ENCODE measurements at regions of chr2 and their contacts with region 1.

Region 1: GRCh38 chr2:8681786-8682692 is at the start of gene ID2:
- DNase-seq: peak; percentile 94 to 98
- H3K4me3 ChIP-seq: peak within 1 kb of the TSS; percentile 79 to 93 (median 89)
- H3K27ac ChIP-seq: peak within 1 kb of the TSS; percentile 58; the same call in 1 of the 2 replicates
- H3K4me1 ChIP-seq: peaks cover 6 to 29% (median 13%) of the 10 kb centered on the region in 4 experiments
- H3K27me3 ChIP-seq: peaks cover 0 to 36% (median 23%) of the 10 kb centered on the region in 4 experiments; a peak in 6 of 7 replicates
- CTCF ChIP-seq: no peak
- EP300 ChIP-seq: no peak
- POLR2A ChIP-seq: peak; percentile 99 to 100
- RAD21 ChIP-seq: peak; percentile 19 to 27; a peak in 2 of 4 replicates
- total RNA-seq, gene ID2: 36.7 and 37.1 TPM in 2 replicates

Region 2: DNA sequence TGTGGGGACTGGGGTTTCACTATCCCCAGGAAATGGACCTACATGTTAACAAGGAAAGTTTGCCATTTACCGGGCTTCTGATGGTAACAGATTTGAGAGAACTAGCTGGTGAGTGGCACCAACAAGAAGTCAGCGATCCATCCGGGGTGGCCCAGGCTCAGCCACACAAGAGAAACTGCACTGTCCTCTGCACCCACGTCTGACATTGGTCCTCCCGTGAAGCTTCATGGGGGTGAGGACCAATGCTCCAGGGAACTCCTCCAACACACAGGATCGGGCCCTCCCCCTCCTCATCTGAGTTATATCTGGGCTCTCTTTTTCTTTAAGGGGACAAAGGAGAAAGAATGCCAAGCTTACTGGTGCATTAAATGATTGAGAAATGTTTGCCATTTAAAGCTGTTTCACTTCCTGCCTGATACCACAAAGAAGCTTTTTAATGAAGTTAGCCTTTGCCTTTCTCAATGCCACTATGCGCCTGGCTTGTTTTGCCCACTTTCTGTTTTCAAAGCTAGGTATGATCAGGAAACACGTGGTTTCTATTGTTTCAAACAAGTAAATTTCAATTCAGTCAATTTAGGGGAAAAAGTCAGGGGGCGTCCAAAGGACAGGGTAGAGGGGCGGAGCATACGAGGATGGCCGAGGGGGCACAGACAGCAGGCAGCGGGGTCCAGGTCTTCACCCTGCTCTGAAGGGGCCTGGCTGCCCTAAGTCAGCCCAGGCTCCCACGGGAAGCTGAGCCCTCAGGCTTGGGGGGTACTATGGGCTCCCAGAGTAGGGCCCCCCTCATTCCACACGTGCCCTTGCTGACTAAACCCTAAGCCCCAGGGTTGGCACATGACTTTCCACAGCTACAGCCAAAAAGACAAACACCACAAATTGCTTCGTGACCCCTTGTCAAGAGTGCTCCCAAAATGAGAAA is 204.2 kb before region 1 on chr2:
- CTCF ChIA-PET with region 1: no interaction called
- POLR2A ChIA-PET with region 1: no interaction called
- DNase-seq: no peak
- H3K4me3 ChIP-seq: no peak overlapping the region
- H3K27ac ChIP-seq: no peak overlapping the region
- H3K4me1 ChIP-seq: no peaks in the 10 kb centered on the region
- H3K27me3 ChIP-seq: no peaks in the 10 kb centered on the region
- CTCF ChIP-seq: no peak
- EP300 ChIP-seq: no peak
- POLR2A ChIP-seq: no peak
- RAD21 ChIP-seq: no peak

Region 3: GRCh38 chr2:8574144-8575037 is 107.6 kb before region 1 on chr2:
- CTCF ChIA-PET with region 1: no interaction called
- POLR2A ChIA-PET with region 1: interaction called, 13 read pairs
- DNase-seq: no peak
- H3K4me3 ChIP-seq: no peak overlapping the region
- H3K27ac ChIP-seq: no peak overlapping the region
- H3K4me1 ChIP-seq: peaks cover 0 to 19% (median 8%) of the 10 kb centered on the region in 4 experiments; a peak in 6 of 7 replicates
- H3K27me3 ChIP-seq: peaks cover 0 to 1% (median 0%) of the 10 kb centered on the region in 4 experiments; a peak in 1 of 7 replicates
- CTCF ChIP-seq: no peak
- EP300 ChIP-seq: no peak
- POLR2A ChIP-seq: no peak
- RAD21 ChIP-seq: no peak

Region 4: DNA sequence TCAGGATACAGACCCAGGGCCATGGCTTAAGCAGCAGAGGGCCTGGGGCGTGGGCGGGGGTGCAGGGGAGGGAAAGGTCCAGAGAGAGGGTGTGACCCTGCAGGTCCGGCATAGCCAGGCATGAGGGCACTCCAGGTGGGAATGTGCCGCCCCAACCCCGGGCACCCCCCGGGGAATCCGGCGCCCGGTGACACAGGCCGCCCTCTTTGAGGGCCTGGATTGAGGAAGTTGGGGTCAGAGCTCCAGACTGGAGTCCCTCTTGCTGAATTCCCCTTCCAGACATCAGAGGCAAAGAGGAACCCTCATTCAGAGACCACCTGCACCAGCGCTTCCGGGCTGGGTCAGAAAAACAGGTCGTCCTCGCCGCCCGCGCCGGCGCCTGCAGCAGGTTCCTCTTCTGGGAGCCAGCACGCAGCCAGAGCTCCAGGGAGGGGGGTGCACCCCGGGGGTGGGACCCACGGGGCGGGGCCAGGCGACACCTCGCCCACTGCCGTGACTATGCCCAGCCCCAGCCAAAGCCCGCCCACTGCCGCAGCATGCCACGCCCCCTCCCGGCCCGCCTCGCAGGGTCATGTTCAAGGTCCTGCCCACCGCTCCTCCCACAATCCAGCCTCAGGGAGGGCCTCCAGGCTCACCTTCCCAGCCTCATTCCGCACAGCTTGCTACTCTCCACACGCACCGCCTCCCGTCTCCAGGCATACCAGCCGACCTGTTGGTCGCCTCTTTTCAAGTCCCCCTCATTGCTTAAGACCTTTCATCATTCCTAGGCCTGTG is 98.5 kb before region 1 on chr2:
- CTCF ChIA-PET with region 1: interaction called, 6 read pairs
- POLR2A ChIA-PET with region 1: interaction called, 19 read pairs
- DNase-seq: peak; percentile 94 to 100
- H3K4me3 ChIP-seq: peak overlapping the region in 2 of 4 experiments; percentile 7 to 38; a peak in 2 of 8 replicates
- H3K27ac ChIP-seq: no peak overlapping the region
- H3K4me1 ChIP-seq: peaks cover 2 to 22% (median 12%) of the 10 kb centered on the region in 4 experiments
- H3K27me3 ChIP-seq: peaks cover 0 to 2% (median under 1%) of the 10 kb centered on the region in 4 experiments; a peak in 2 of 7 replicates
- CTCF ChIP-seq: no peak
- EP300 ChIP-seq: no peak
- POLR2A ChIP-seq: no peak
- RAD21 ChIP-seq: no peak

Region 5: GRCh38 chr2:8638327-8638726 is 43.7 kb before region 1 on chr2:
- CTCF ChIA-PET with region 1: interaction called, 6 read pairs
- POLR2A ChIA-PET with region 1: interaction called, 23 read pairs
- DNase-seq: no peak
- H3K4me3 ChIP-seq: peak overlapping the region in 1 of 4 experiments; percentile 25; a peak in 2 of 8 replicates
- H3K27ac ChIP-seq: no peak overlapping the region
- H3K4me1 ChIP-seq: peaks cover 13 to 45% (median 25%) of the 10 kb centered on the region in 4 experiments
- H3K27me3 ChIP-seq: peaks cover 1 to 10% (median 5%) of the 10 kb centered on the region in 4 experiments; a peak in 5 of 7 replicates
- CTCF ChIP-seq: no peak
- EP300 ChIP-seq: no peak
- POLR2A ChIP-seq: no peak
- RAD21 ChIP-seq: no peak

Region 6: DNA sequence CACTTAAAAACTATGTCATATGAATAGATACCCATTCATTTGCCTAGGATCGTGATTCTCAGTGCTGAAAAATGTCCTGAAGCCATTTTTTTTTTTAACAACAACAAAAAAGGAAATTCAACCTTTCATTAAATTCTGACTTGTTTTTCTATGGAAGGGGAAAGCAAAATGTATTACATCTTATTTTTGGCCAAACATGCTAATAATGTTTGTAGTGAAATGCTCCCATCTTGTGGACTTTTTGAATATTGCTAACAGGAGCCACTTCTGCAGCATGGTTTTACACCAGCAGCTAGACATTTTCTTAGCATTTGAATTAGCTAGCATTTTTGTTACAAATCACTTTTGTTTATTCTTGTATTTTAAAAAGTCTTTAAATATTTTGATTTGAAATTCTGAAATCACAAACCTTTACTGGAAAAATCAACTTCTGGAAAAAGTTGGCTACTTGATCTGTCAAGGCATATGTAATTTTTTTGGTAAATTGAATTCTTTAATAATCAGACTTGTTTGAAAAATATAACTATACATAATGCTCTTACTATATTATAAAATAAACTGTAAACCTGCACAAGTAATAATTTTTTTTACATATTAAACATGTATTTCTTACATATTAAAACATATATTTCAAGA is 79.6 kb after region 1 on chr2:
- CTCF ChIA-PET with region 1: no interaction called
- POLR2A ChIA-PET with region 1: no interaction called
- DNase-seq: no peak
- H3K4me3 ChIP-seq: no peak overlapping the region
- H3K27ac ChIP-seq: no peak overlapping the region
- H3K4me1 ChIP-seq: no peaks in the 10 kb centered on the region
- H3K27me3 ChIP-seq: no peaks in the 10 kb centered on the region
- CTCF ChIP-seq: peak in 2 of 3 experiments; percentile 32 to 48; a peak in 2 of 4 replicates
- EP300 ChIP-seq: no peak
- POLR2A ChIP-seq: no peak
- RAD21 ChIP-seq: peak; percentile 69 to 73